Dorsolateral prefrontal cortex (tissue), 120 donors: ENCODE measurements at regions of chr15 and their contacts with region 1.

Region 1: DNA sequence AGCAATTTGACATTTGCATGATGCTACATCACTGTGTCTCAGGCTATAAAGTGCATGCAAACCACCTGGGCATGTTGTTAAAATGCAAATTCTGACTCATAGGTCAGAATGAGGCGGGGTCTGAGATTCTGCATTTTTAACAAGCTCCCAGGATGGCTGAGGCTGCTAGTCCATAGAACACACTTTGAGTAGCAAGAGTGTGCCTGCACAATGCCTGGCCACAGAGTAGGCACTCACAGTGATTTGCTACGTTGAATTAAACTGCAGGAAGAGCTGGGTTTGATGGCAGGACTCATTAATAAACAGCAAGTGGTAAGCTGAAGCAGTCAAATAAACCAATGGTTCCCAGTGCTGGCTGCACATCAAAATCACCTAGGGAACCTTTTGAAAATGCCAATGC is 48.1 kb downstream of the NTRK3 start:
- DNase-seq: peak in 1 of 10 donors; percentile 24
- H3K4me3 ChIP-seq: no peak overlapping the region
- H3K27ac ChIP-seq: peak overlapping the region in 9 of 59 donors; percentile 27 to 74 (median 64)
- H3K27me3 ChIP-seq: no peaks in the 10 kb centered on the region
- CTCF ChIP-seq: no peak

Region 2: DNA sequence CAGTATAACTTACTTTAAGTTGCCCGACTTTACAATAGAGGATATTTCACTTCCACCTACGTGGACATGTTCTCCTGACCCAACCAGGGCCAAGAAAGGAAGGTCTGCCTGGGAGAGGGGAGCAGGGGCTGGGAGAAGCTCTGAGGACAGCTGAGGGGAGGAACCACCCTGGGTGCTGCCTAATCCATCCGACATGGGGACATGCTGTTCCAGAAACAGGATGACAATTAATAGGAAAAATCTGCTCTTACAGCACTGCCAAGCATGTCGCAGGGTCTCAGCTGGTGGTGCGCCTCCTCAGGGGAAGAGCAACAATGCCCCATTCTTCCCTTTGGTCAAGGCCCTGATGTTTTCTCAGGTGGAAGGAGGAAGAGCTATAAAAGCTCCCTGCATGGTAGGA is 84.2 kb before region 1 on chr15:
- intact Hi-C with region 1: loop called in 1 of 2 experiments (anchors 5 kb)
- DNase-seq: no peak
- H3K4me3 ChIP-seq: no peak overlapping the region
- H3K27ac ChIP-seq: peak overlapping the region in 7 of 59 donors; percentile 6 to 66 (median 37)
- H3K27me3 ChIP-seq: no peaks in the 10 kb centered on the region
- CTCF ChIP-seq: no peak